Activated naive CD4-positive, alpha-beta T cell treated with anti-CD3 and anti-CD28 coated beads, Interleukin-2, amount 10 ng/mL, durations not matched to agents 7 days and 5 days (primary cell): ENCODE measurements at regions of chr14 and their contacts with region 1.

Region 1: GRCh38 chr14:63770187-63770807 is 42.4 kb upstream of the SGPP1 start:
- DNase-seq: peak; percentile 73
- H3K4me3 Mint-ChIP-seq: no peak overlapping the region
- H3K27ac Mint-ChIP-seq: no peak overlapping the region
- H3K4me1 Mint-ChIP-seq: peaks cover 14% of the 10 kb centered on the region
- H3K27me3 Mint-ChIP-seq: no peaks in the 10 kb centered on the region

Region 2: DNA sequence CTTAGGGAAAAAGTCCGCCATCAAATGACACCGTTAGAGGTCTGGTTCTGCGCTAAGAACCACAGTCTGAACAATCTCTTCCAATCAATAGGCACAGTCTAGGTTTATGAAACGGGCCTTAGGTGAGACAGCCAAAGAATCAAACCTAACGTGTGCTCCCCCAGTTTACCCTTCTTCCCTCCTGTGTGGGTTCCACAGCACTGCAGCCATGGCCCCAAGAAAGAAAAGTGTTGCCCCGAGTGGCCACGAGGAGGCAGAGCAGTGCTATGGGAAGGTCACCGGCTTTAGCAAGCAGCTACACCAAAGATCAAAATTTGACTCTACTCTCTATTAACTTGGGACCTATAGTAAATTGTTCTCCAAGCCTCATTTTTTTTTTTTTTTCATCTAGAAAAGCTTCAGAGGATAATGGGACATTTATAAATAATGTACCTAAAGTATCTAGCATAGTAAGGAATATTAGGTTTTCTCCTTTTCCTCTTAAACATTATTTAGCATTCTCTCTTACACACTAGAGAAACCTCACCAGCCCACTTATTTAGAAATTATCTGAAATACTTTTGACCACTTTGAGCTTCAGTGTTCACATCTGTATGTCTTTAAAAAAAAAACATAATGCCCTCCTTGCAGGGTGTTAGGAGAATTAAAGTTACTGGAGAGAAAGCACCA is 381.4 kb before region 1 on chr14:
- CTCF ChIA-PET with region 1: interaction called, 17 read pairs
- DNase-seq: peak; percentile 75
- H3K4me3 Mint-ChIP-seq: no peak overlapping the region
- H3K27ac Mint-ChIP-seq: no peak overlapping the region
- H3K4me1 Mint-ChIP-seq: peaks cover 6% of the 10 kb centered on the region
- H3K27me3 Mint-ChIP-seq: no peaks in the 10 kb centered on the region

Region 3: DNA sequence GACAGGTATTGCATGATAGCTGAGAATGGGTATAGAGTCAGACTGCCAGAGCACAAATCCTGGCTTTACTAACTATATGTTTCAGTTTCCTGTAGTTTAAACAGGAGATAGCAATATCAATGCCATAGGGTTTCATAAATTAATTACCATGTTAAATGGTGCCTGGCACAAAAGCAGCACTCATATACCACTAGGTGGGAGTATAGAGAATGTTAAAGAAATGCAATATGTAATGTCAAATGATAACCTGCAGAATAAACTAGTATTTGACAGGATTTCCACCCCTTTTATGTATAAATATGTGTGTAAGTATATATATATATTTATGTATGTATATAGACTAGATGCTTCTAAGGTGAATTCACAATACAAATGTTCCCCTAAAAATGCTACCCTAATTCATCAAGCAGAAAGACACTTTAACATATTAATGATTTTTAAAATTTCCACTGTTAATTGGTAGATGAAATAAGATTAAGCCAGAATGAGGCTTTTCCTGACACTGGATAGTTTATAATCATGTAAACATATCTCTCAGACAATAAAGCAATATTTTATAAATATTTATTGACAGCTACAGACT is 137.3 kb before region 1 on chr14:
- CTCF ChIA-PET with region 1: interaction called, 69 read pairs
- DNase-seq: no peak
- H3K4me3 Mint-ChIP-seq: no peak overlapping the region
- H3K27ac Mint-ChIP-seq: no peak overlapping the region
- H3K4me1 Mint-ChIP-seq: peaks cover 31% of the 10 kb centered on the region
- H3K27me3 Mint-ChIP-seq: no peaks in the 10 kb centered on the region

Region 4: DNA sequence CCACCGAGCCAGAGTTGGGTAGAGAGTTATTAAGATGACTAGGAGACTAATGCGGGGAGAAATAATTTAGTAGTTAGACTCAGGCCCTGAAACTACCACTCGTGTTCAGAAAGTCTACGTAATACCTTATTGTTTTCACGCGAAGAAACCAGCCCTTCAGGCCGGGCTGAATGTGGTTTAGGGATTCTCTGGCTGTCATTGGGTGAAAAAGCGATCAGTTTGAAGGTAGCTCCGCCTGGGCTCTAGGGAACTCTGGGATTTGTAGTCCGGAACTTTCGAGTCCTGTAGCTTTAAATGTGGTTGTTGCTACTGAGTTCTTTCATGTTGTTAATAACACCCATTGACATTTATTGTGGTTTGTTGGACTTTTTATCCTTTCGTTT is 128.1 kb before region 1 on chr14:
- CTCF ChIA-PET with region 1: interaction called, 10 read pairs
- DNase-seq: peak; percentile 90
- H3K4me3 Mint-ChIP-seq: peak overlapping the region; percentile 77
- H3K27ac Mint-ChIP-seq: peak overlapping the region; percentile 93
- H3K4me1 Mint-ChIP-seq: peaks cover 39% of the 10 kb centered on the region
- H3K27me3 Mint-ChIP-seq: no peaks in the 10 kb centered on the region

Region 5: GRCh38 chr14:63727774-63728728 is 42.2 kb before region 1 on chr14 and contains the start of gene SGPP1:
- CTCF ChIA-PET with region 1: interaction called, 20 read pairs
- DNase-seq: peak; percentile 89
- H3K4me3 Mint-ChIP-seq: peak within 1 kb of the TSS; percentile 99
- H3K27ac Mint-ChIP-seq: peak within 1 kb of the TSS; percentile 94
- H3K4me1 Mint-ChIP-seq: peaks cover 42% of the 10 kb centered on the region
- H3K27me3 Mint-ChIP-seq: peaks cover 23% of the 10 kb centered on the region

Region 6: GRCh38 chr14:63757211-63757610 is 13.1 kb before region 1 on chr14:
- CTCF ChIA-PET with region 1: interaction called, 13 read pairs
- DNase-seq: no peak
- H3K4me3 Mint-ChIP-seq: no peak overlapping the region
- H3K27ac Mint-ChIP-seq: no peak overlapping the region
- H3K4me1 Mint-ChIP-seq: peaks cover 21% of the 10 kb centered on the region
- H3K27me3 Mint-ChIP-seq: peaks cover 6% of the 10 kb centered on the region